B cell (primary cell): ENCODE measurements at regions of chr20 and their contacts with region 1.

Region 1: GRCh38 chr20:48828022-48828743 is 384 bp upstream of the PREX1 start:
- DNase-seq: peak; percentile 93
- ATAC-seq: peak; percentile 78
- H3K4me3 ChIP-seq: peak overlapping the region in 4 of 5 experiments; percentile 34 to 68 (median 56)
- H3K4me3 Mint-ChIP-seq: peak overlapping the region; percentile 89
- H3K27ac ChIP-seq: peak overlapping the region in 1 of 2 donors; percentile 66
- H3K27ac Mint-ChIP-seq: peak overlapping the region; percentile 87
- H3K4me1 ChIP-seq: peaks cover 51 to 62% of the 10 kb centered on the region in 2 donors
- H3K4me1 Mint-ChIP-seq: peaks cover 67% of the 10 kb centered on the region
- H3K27me3 ChIP-seq: no peaks in the 10 kb centered on the region
- H3K27me3 Mint-ChIP-seq: no peaks in the 10 kb centered on the region
- CTCF ChIP-seq: no peak

Region 2: DNA sequence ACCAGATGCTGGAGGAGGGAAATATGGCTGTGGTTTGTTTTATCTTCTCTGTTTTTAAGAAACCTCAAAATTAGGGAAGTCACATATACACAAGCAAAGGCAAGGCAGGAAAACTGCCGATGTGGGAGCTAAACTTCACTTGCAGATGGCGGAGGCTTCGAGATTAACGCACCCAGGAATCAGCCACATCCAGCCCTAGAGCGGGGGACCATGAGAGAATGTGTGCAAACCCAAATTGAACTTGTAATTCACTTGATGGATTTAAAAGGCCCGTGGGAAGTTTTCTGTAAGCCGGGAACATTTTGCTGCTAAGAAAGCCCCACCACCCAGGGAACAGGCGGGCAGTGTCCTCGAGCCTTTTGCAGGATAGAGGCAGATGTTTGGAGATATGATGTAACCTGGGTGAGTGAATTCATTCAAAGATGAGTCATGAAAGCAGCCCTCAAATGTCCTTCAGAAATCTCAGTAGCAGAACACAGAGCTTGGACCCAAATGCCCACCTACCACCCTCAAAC is 40.3 kb before region 1 on chr20:
- CTCF ChIA-PET with region 1: interaction called, 8 read pairs
- POLR2A ChIA-PET with region 1: interaction called, 7 read pairs
- intact Hi-C with region 1: loop called (anchors 2 kb)
- DNase-seq: peak; percentile 60
- ATAC-seq: no peak
- H3K4me3 ChIP-seq: peak overlapping the region in 1 of 5 experiments; percentile 23
- H3K4me3 Mint-ChIP-seq: peak overlapping the region; percentile 63
- H3K27ac ChIP-seq: peak overlapping the region; percentile 74 to 80
- H3K27ac Mint-ChIP-seq: peak overlapping the region; percentile 94
- H3K4me1 ChIP-seq: peaks cover 75 to 86% of the 10 kb centered on the region in 2 donors
- H3K4me1 Mint-ChIP-seq: peaks cover 74% of the 10 kb centered on the region
- H3K27me3 ChIP-seq: no peaks in the 10 kb centered on the region
- H3K27me3 Mint-ChIP-seq: no peaks in the 10 kb centered on the region
- CTCF ChIP-seq: no peak

Region 3: DNA sequence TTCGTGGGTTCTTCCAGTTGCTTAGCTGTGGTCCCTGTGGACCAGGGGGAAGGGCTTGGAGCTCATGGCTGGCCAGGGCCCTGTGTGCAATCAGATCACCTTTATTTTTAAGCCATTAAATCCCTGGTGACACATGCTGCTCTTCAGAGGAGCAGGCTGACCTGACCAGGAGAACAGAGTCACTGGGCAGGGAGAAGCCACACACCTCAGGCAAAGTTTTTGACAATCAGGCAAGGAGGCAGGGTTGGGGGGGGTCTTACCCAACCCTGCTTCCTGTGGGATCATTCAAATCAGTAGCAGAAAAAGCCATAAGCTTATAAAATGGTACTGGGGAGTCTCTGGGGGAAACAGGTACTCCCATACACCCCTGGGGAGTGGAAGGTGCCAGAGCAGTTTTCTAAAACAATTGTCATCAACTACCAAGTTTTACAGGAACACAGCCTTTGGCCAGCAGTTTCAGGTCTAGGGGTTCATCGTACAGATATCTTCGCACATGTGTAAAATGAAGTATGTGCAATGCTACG is 36.7 kb after region 1 on chr20:
- CTCF ChIA-PET with region 1: interaction called, 3 read pairs
- POLR2A ChIA-PET with region 1: interaction called, 3 read pairs
- intact Hi-C with region 1: loop called (anchors 5 kb)
- DNase-seq: no peak
- ATAC-seq: no peak
- H3K4me3 ChIP-seq: no peak overlapping the region
- H3K4me3 Mint-ChIP-seq: no peak overlapping the region
- H3K27ac ChIP-seq: no peak overlapping the region
- H3K27ac Mint-ChIP-seq: no peak overlapping the region
- H3K4me1 ChIP-seq: peaks cover 40 to 44% of the 10 kb centered on the region in 2 donors
- H3K4me1 Mint-ChIP-seq: peaks cover 42% of the 10 kb centered on the region
- H3K27me3 ChIP-seq: no peaks in the 10 kb centered on the region
- H3K27me3 Mint-ChIP-seq: no peaks in the 10 kb centered on the region
- CTCF ChIP-seq: no peak

Region 4: GRCh38 chr20:48904365-48905296 is 76.4 kb after region 1 on chr20:
- CTCF ChIA-PET with region 1: interaction called, 17 read pairs
- POLR2A ChIA-PET with region 1: no interaction called
- intact Hi-C with region 1: loop called (anchors 5 kb)
- DNase-seq: peak; percentile 81
- ATAC-seq: peak; percentile 78
- H3K4me3 ChIP-seq: no peak overlapping the region
- H3K4me3 Mint-ChIP-seq: peak overlapping the region; percentile 19
- H3K27ac ChIP-seq: no peak overlapping the region
- H3K27ac Mint-ChIP-seq: no peak overlapping the region
- H3K4me1 ChIP-seq: peaks cover 6 to 7% of the 10 kb centered on the region in 2 donors
- H3K4me1 Mint-ChIP-seq: peaks cover 10% of the 10 kb centered on the region
- H3K27me3 ChIP-seq: no peaks in the 10 kb centered on the region
- H3K27me3 Mint-ChIP-seq: no peaks in the 10 kb centered on the region
- CTCF ChIP-seq: peak; percentile 90

Region 5: GRCh38 chr20:48945851-48946514 is 117.8 kb after region 1 on chr20:
- CTCF ChIA-PET with region 1: no interaction called
- POLR2A ChIA-PET with region 1: no interaction called
- intact Hi-C with region 1: no loop called
- DNase-seq: no peak
- ATAC-seq: no peak
- H3K4me3 ChIP-seq: no peak overlapping the region
- H3K4me3 Mint-ChIP-seq: no peak overlapping the region
- H3K27ac ChIP-seq: no peak overlapping the region
- H3K27ac Mint-ChIP-seq: no peak overlapping the region
- H3K4me1 ChIP-seq: no peaks in the 10 kb centered on the region
- H3K4me1 Mint-ChIP-seq: no peaks in the 10 kb centered on the region
- H3K27me3 ChIP-seq: no peaks in the 10 kb centered on the region
- H3K27me3 Mint-ChIP-seq: no peaks in the 10 kb centered on the region
- CTCF ChIP-seq: no peak

Region 6: GRCh38 chr20:49684335-49684997 is 856.3 kb after region 1 on chr20:
- CTCF ChIA-PET with region 1: no interaction called
- POLR2A ChIA-PET with region 1: interaction called, 11 read pairs
- intact Hi-C with region 1: no loop called
- DNase-seq: no peak
- ATAC-seq: no peak
- H3K4me3 ChIP-seq: no peak overlapping the region
- H3K4me3 Mint-ChIP-seq: no peak overlapping the region
- H3K27ac ChIP-seq: no peak overlapping the region
- H3K27ac Mint-ChIP-seq: no peak overlapping the region
- H3K4me1 ChIP-seq: no peaks in the 10 kb centered on the region
- H3K4me1 Mint-ChIP-seq: peaks cover 19% of the 10 kb centered on the region
- H3K27me3 ChIP-seq: no peaks in the 10 kb centered on the region
- H3K27me3 Mint-ChIP-seq: no peaks in the 10 kb centered on the region
- CTCF ChIP-seq: no peak